ENCODE measurements at regions of chr3 and their contacts with region 1.

Region 1: GRCh38 chr3:27484015-27484844 is at the start of gene SLC4A7:
- DNase-seq: peak; percentile 71
- ATAC-seq: peak; percentile 95
- H3K4me3 ChIP-seq: peak within 1 kb of the TSS; percentile 88
- H3K27ac ChIP-seq: peak within 1 kb of the TSS; percentile 77
- H3K4me1 ChIP-seq: peaks cover 6% of the 10 kb centered on the region
- H3K27me3 ChIP-seq: no peaks in the 10 kb centered on the region
- CTCF ChIP-seq: no peak
- EP300 ChIP-seq: no peak
- POLR2A ChIP-seq: peak; percentile 96
- RAD21 ChIP-seq: no peak
- polyA plus RNA-seq, gene SLC4A7: 4.4 to 8.6 TPM

Region 2: GRCh38 chr3:27533718-27534573 is 49.7 kb after region 1 on chr3:
- CTCF ChIA-PET with region 1: no interaction called
- POLR2A ChIA-PET with region 1: no interaction called
- RAD21 ChIA-PET with region 1: interaction called, 6 read pairs
- SMC1A ChIA-PET with region 1: interaction called, 3 read pairs
- in situ Hi-C with region 1: no loop called
- intact Hi-C with region 1: loop called (anchors 5 kb)
- DNase-seq: peak; percentile 48
- ATAC-seq: peak; percentile 69
- H3K4me3 ChIP-seq: no peak overlapping the region
- H3K27ac ChIP-seq: no peak overlapping the region
- H3K4me1 ChIP-seq: no peaks in the 10 kb centered on the region; the same call in 1 of the 2 replicates
- H3K27me3 ChIP-seq: no peaks in the 10 kb centered on the region
- CTCF ChIP-seq: no peak
- EP300 ChIP-seq: no peak
- POLR2A ChIP-seq: no peak
- RAD21 ChIP-seq: no peak

Region 3: GRCh38 chr3:27596334-27596841 is 112.2 kb after region 1 on chr3:
- CTCF ChIA-PET with region 1: interaction called, 4 read pairs
- POLR2A ChIA-PET with region 1: no interaction called
- RAD21 ChIA-PET with region 1: no interaction called
- SMC1A ChIA-PET with region 1: no interaction called
- in situ Hi-C with region 1: no loop called
- intact Hi-C with region 1: loop called (anchors 1 kb)
- DNase-seq: peak; percentile 56
- ATAC-seq: peak; percentile 84
- H3K4me3 ChIP-seq: no peak overlapping the region
- H3K27ac ChIP-seq: no peak overlapping the region
- H3K4me1 ChIP-seq: peaks cover 18% of the 10 kb centered on the region
- H3K27me3 ChIP-seq: no peaks in the 10 kb centered on the region; a peak in 1 of 4 replicates
- CTCF ChIP-seq: peak in 1 of 3 experiments; percentile 11; a peak in 1 of 6 replicates
- EP300 ChIP-seq: 0 out of 4 replicates have a peak, but pooled peaks of 1 of the 2 experiments have one; percentile 15
- POLR2A ChIP-seq: no peak
- RAD21 ChIP-seq: peak; percentile 23; the same call in 1 of the 2 replicates

Region 4: DNA sequence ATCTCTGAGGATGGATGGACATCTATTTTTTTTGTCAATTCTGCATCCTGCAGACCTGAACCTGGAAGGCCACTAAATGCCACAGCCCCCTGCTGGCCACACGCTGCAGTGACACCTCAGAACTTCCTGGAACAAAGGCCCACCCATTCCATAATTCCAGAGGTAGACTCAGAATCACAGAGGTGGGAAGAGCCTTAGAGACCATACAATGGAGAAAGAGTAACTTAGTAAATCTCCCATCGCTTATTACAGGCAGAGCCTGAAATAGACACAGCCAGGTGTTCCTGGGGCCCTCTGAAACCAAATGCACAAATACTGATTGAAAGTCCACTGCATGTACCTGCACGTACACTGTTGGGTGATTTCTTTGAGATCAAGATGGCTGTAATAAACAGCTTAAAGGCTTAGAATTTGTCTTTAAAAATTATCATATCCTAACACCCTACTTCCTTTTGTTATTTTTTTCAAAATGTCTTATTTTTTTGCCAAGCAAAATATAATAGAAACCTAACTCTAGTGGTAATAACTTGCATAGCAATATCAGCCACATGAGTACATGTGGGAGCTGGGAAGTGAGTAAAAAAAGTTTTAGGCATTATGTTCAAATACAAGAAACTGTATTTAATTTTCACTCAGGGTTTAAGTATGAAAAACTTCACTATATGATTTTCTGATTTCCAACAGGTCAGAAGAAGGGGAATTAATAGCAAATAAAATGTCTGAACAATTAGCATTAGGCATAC is 175.2 kb after region 1 on chr3:
- CTCF ChIA-PET with region 1: interaction called, 3 read pairs
- POLR2A ChIA-PET with region 1: no interaction called
- RAD21 ChIA-PET with region 1: interaction called, 3 read pairs
- SMC1A ChIA-PET with region 1: no interaction called
- in situ Hi-C with region 1: no loop called
- intact Hi-C with region 1: loop called (anchors 5 kb)
- DNase-seq: no peak
- ATAC-seq: peak; percentile 85
- H3K4me3 ChIP-seq: no peak overlapping the region
- H3K27ac ChIP-seq: no peak overlapping the region
- H3K4me1 ChIP-seq: no peaks in the 10 kb centered on the region
- H3K27me3 ChIP-seq: no peaks in the 10 kb centered on the region
- CTCF ChIP-seq: peak; percentile 69 to 86 (median 80)
- EP300 ChIP-seq: no peak
- POLR2A ChIP-seq: no peak
- RAD21 ChIP-seq: peak; percentile 55

Region 5: DNA sequence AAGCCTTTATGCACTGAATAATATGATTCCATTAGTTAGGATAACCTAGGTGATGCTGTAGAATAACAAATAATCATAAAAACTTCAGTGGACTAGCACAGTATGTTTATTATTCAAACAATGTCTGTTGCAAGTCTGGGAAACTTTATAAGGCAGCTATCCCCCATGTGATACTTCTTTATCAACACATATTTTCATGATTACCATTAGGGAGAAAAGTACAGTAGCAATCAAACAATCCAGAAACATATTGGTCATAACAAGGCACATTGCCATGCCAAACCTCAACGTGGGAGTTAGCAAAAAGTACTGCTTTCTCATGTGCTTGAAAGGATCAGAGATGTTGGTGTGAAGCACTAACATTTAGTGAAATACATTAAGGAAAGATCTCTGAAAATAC is 202.4 kb after region 1 on chr3:
- CTCF ChIA-PET with region 1: interaction called, 6 read pairs
- POLR2A ChIA-PET with region 1: interaction called, 10 read pairs
- RAD21 ChIA-PET with region 1: no interaction called
- SMC1A ChIA-PET with region 1: interaction called, 5 read pairs
- in situ Hi-C with region 1: no loop called
- intact Hi-C with region 1: no loop called
- DNase-seq: no peak
- ATAC-seq: no peak
- H3K4me3 ChIP-seq: no peak overlapping the region
- H3K27ac ChIP-seq: no peak overlapping the region
- H3K4me1 ChIP-seq: no peaks in the 10 kb centered on the region
- H3K27me3 ChIP-seq: no peaks in the 10 kb centered on the region; a peak in 1 of 4 replicates
- CTCF ChIP-seq: no peak
- EP300 ChIP-seq: no peak
- POLR2A ChIP-seq: no peak
- RAD21 ChIP-seq: no peak

Region 6: DNA sequence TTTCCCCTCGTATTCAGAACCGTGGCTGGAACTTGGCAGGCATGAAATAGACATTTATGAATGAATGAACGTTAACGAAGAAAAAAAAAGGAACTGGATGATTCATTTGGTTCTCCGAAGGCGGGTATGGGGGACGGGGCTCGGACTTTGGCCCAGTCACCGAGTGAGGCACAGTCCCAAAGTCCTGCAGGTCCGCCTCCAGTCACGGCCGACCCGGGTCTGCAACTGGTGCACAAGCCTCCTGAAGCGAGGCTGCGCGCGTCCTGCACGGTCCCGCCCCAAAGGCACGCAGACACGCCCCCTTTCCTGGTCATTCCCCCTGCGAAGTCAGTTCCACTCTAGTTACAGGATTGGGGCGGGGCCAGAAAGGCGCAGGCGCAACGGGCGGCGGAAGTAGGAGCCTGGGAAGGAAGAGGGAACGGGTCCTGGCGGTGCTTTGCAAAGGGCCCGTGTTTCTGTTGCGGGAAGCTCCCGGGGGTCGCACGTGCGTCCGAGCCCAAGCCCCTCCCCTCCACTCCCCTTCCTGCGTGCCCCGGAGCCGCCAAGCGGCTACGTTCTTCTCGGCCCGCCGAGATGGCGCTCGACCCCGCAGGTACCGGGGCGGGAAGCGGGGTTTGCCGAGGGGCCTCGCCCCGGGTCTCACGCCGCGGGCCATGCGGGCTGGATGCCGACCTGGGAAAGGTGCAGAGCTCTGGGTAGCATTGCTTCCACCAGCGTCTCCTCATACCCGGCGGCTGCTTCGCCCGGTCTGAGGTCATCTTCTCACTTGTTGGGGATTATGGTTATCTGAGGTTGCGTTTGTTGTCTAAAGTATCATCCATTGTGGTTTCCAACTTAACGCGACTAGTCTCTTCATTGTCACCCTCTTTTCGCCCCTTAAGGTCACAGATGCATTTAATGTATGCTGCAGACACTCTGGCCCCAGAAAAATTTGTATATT is 757.3 kb after region 1 on chr3 and contains the start of gene CMC1:
- CTCF ChIA-PET with region 1: no interaction called
- POLR2A ChIA-PET with region 1: no interaction called
- RAD21 ChIA-PET with region 1: no interaction called
- SMC1A ChIA-PET with region 1: no interaction called
- in situ Hi-C with region 1: no loop called
- intact Hi-C with region 1: loop called (anchors 5 kb)
- DNase-seq: peak; percentile 85
- ATAC-seq: peak; percentile 95
- H3K4me3 ChIP-seq: peak within 1 kb of the TSS; percentile 81
- H3K27ac ChIP-seq: peak within 1 kb of the TSS; percentile 79
- H3K4me1 ChIP-seq: no peaks in the 10 kb centered on the region
- H3K27me3 ChIP-seq: no peaks in the 10 kb centered on the region
- CTCF ChIP-seq: no peak
- EP300 ChIP-seq: peak; percentile 24 to 28; a peak in 2 of 4 replicates
- POLR2A ChIP-seq: peak; percentile 84
- RAD21 ChIP-seq: no peak
- polyA plus RNA-seq, gene CMC1: 26.9 to 41.2 TPM

Region 7: GRCh38 chr3:28348629-28349483 is 864.6 kb after region 1 on chr3 and contains the starts of genes AZI2 and ZCWPW2:
- CTCF ChIA-PET with region 1: no interaction called
- POLR2A ChIA-PET with region 1: no interaction called
- RAD21 ChIA-PET with region 1: no interaction called
- SMC1A ChIA-PET with region 1: interaction called, 3 read pairs
- in situ Hi-C with region 1: loop called (anchors 10 kb)
- intact Hi-C with region 1: loop called (anchors 10 kb)
- DNase-seq: peak; percentile 74
- ATAC-seq: peak; percentile 92
- H3K4me3 ChIP-seq: peak within 1 kb of the TSS; percentile 81
- H3K27ac ChIP-seq: peak within 1 kb of the TSS; percentile 97
- H3K4me1 ChIP-seq: no peaks in the 10 kb centered on the region
- H3K27me3 ChIP-seq: no peaks in the 10 kb centered on the region
- CTCF ChIP-seq: peak; percentile 20 to 43 (median 23); a peak in 4 of 6 replicates
- EP300 ChIP-seq: peak in 1 of 2 experiments; percentile 53; a peak in 1 of 4 replicates
- POLR2A ChIP-seq: peak; percentile 88
- RAD21 ChIP-seq: no peak
- polyA plus RNA-seq, gene AZI2: 33.4 to 36.2 TPM
- polyA plus RNA-seq, gene ZCWPW2: 0.31 to 0.37 TPM

Measured in GM12878 (cell line).